Posterior cingulate gyrus (tissue), 11 donors: ENCODE measurements at regions of chr1 and their contacts with region 1.

Region 1: GRCh38 chr1:207963427-207964194 is 52.7 kb upstream of the CD34 start:
- DNase-seq: peak; percentile 73 to 97 (median 82)

Region 2: DNA sequence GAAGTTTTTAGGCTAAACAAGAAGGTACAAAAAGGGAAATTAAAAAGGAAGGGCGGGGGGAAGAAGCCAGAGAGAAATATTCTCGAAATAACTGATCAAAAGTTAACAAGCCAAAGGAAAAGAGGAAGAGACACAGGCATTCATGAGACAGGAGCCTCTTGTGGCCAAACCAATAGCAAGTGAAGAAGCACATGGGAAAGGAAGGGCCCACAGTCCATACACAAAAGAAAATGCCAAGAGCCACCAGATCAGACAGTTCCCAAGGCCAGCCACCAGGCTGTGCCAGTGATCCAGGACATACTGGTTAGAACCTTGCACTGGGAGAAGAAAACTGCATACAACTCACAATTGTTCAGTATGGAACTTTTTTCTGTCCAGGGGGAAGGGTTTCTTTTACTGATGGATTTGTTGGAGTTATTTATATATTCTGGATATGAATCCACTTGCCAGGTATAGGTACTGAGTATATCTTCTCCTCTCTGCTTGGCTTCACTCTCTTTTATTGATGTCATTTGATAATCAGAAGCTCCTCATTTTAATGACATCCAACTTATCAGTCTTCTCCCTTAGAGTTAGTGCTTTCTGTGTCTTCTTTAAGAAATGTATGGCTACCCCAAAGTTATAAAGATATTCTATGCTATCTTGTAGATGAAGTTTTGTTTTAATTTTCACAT is 135.0 kb before region 1 on chr1:
- intact Hi-C with region 1: loop called (anchors 5 kb)
- DNase-seq: peak in 6 of 10 donors; percentile 61 to 96 (median 70)

Region 3: DNA sequence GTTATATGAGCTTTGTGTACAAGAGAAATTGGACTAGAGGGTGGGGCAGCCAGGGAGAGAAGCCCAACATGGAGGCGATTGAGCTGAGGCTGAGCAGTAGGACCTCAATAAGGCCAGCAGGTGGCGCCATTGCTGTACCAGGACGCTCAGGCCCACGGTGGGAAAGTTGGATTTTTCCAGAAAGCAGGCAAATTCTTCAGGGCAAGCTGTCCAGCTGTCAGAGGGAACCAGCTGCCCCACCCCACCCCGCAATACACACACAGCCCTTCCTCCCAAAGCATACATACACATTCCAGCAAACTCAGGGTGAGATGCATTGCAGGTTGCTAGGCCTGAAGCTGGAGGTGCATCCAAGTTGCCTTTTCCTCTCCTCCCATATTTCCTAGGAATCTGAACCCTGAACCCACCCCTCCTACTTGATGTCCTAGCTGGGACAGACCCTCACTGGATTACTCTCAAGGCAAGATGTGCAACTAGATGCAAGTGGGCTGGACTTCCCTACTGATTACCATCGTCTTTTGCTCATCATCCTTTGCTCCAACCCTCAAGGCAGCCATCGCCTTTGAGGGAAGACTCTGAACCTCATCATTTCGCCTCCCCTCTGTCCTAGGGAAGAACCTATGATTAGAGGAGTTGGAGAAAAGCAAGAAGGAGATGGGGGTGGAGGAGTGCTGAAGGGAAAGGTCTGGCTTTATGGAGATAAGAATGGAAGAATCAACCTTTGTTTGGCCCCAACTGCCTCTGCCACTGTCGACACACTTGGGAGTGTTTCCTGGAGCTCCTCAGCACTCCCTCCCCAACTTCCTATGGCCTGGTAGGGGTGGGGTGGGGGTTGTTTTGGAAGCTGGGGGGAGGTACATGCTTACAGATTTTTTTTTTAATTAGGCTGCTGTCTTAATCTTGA is 78.2 kb before region 1 on chr1:
- intact Hi-C with region 1: loop called (anchors 1 kb)
- DNase-seq: peak; percentile 64 to 97 (median 83)

Region 4: GRCh38 chr1:207897188-207897587 is 66.4 kb before region 1 on chr1:
- intact Hi-C with region 1: loop called (anchors 1 kb)
- DNase-seq: no peak

Region 5: DNA sequence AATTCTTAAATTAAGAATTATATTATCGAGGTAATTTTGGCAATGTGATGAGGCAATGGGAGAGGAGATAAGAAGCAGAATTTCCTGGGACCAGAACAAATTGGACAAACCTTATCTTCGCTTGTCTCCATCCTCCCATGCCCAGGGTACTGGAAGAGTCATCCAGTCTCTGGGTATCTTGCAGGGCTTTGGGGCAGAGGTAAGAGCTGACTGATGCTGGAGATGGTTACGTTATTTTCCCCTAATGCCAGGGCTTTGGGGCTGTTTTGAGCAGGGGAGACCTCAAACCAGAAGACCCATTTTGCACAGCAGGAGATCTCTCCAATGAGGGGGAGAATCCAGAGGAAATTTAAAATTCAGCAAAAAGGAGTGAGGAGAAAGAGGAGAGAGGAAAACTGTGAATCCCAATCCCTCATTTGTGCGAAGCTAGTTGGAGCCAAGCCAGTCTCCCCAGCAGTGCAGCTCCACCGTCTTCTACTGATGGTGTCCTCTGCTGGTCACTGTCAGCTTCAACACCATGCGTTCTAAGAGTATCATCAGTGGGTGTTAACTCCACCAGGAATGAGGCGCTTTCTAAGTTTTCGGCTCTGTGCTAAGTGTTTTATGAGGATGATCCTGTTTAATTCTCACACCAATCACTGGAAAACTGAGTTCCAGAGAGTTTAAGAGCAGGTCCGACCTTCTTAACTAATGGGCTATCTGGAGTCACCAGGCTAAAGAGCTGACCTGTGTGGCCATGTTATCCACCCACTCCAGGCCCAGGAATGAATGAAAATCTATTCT is 34.1 kb after region 1 on chr1:
- intact Hi-C with region 1: no loop called
- DNase-seq: peak; percentile 17 to 92 (median 71)

Region 6: DNA sequence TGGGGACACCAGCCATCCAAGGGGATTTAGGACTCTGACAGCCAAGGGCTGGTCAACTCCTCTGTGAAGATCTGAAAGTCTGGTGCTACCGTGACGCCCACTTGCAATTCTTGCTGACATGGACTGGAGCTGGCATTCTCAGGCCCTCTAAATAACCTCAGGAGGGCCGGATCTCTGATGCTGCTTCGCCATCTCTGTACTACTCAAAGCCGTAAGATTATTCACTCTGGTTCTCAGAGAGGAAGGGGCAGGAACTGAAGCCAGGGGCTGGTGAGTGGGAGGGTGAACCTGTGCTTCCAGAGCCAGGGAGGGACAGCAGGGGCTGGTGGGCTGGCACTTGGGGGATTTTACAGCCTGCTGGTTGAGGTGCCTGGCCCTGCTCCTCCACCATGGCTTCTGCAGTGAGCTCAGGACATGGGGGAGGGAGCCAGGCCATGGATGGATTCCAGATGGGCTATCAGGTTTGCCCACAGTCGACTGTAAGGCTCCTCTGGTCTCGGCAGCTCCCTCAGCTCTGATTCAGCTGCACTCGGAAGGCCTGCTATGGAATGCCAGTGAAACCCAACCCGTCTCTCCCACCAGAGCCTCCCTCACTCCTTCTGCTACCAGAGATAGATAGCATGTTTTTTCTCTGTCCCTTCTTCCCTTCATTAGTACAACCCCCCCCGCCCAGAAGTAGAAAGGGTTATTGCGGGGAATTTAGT is 196.1 kb after region 1 on chr1:
- intact Hi-C with region 1: no loop called
- DNase-seq: peak in 1 of 10 donors; percentile 81